ENCODE measurements at regions of chr19 and their contacts with region 1.

Region 1: GRCh38 chr19:48553676-48554386 is 1.9 kb downstream of the SULT2B1 start:
- DNase-seq: peak; percentile 99 to 100
- H3K4me3 ChIP-seq: peak overlapping the region; percentile 24
- H3K4me3 Mint-ChIP-seq: peak overlapping the region; percentile 75
- H3K27ac Mint-ChIP-seq: peak overlapping the region; percentile 98
- H3K4me1 ChIP-seq: peaks cover 63% of the 10 kb centered on the region
- H3K4me1 Mint-ChIP-seq: peaks cover 43% of the 10 kb centered on the region
- H3K27me3 ChIP-seq: no peaks in the 10 kb centered on the region
- H3K27me3 Mint-ChIP-seq: no peaks in the 10 kb centered on the region
- CTCF ChIP-seq: no peak

Region 2: DNA sequence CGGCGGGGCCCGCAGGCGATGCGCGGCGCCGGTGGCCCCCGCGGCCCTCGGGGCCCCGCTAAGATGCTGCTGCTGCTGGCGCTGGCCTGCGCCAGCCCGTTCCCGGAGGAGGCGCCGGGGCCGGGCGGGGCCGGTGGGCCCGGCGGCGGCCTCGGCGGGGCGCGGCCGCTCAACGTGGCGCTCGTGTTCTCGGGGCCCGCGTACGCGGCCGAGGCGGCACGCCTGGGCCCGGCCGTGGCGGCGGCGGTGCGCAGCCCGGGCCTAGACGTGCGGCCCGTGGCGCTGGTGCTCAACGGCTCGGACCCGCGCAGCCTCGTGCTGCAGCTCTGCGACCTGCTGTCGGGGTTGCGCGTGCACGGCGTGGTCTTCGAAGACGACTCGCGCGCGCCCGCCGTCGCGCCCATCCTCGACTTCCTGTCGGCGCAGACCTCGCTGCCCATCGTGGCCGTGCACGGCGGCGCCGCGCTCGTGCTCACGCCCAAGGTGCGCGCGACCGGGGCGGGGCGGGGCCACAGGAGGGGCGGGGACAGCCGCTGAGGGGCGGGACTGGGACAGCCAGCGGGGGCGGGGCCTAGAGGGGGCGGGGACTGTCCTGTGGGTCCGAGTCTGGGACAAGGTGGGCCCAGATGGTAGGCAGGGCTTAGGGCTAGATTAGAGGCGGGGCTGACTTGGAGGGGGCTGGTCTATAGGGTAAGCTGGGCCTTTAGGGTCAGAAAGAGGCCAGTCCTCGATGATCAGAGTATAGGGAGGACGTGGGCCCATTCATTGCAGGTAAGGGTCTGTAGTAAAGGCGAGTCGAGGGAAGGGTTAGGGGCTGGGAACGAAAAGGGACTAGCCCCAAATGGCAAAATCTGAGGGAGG is 155.2 kb before region 1 on chr19:
- CTCF ChIA-PET with region 1: no interaction called
- POLR2A ChIA-PET with region 1: interaction called, 11 read pairs
- intact Hi-C with region 1: no loop called
- DNase-seq: peak; percentile 93 to 95
- H3K4me3 ChIP-seq: peak overlapping the region; percentile 51
- H3K4me3 Mint-ChIP-seq: peak overlapping the region; percentile 83
- H3K27ac Mint-ChIP-seq: peak overlapping the region; percentile 67
- H3K4me1 ChIP-seq: peaks cover 35% of the 10 kb centered on the region
- H3K4me1 Mint-ChIP-seq: peaks cover 50% of the 10 kb centered on the region
- H3K27me3 ChIP-seq: no peaks in the 10 kb centered on the region
- H3K27me3 Mint-ChIP-seq: no peaks in the 10 kb centered on the region
- CTCF ChIP-seq: no peak

Region 3: GRCh38 chr19:48513289-48514122 is 40.3 kb before region 1 on chr19:
- CTCF ChIA-PET with region 1: interaction called, 5 read pairs
- POLR2A ChIA-PET with region 1: interaction called, 4 read pairs
- intact Hi-C with region 1: loop called (anchors 1 kb)
- DNase-seq: peak; percentile 85 to 87
- H3K4me3 ChIP-seq: peak overlapping the region; percentile 83
- H3K4me3 Mint-ChIP-seq: no peak overlapping the region
- H3K27ac Mint-ChIP-seq: peak overlapping the region; percentile 60
- H3K4me1 ChIP-seq: peaks cover 18% of the 10 kb centered on the region
- H3K4me1 Mint-ChIP-seq: peaks cover 35% of the 10 kb centered on the region
- H3K27me3 ChIP-seq: no peaks in the 10 kb centered on the region
- H3K27me3 Mint-ChIP-seq: no peaks in the 10 kb centered on the region
- CTCF ChIP-seq: no peak

Region 4: GRCh38 chr19:48571378-48572162 is 17.7 kb after region 1 on chr19:
- CTCF ChIA-PET with region 1: interaction called, 6 read pairs
- POLR2A ChIA-PET with region 1: interaction called, 7 read pairs
- intact Hi-C with region 1: loop called (anchors 1 kb)
- DNase-seq: peak; percentile 64 to 74
- H3K4me3 ChIP-seq: no peak overlapping the region
- H3K4me3 Mint-ChIP-seq: no peak overlapping the region
- H3K27ac Mint-ChIP-seq: peak overlapping the region; percentile 67
- H3K4me1 ChIP-seq: peaks cover 31% of the 10 kb centered on the region
- H3K4me1 Mint-ChIP-seq: peaks cover 23% of the 10 kb centered on the region
- H3K27me3 ChIP-seq: no peaks in the 10 kb centered on the region
- H3K27me3 Mint-ChIP-seq: no peaks in the 10 kb centered on the region
- CTCF ChIP-seq: no peak

Region 5: DNA sequence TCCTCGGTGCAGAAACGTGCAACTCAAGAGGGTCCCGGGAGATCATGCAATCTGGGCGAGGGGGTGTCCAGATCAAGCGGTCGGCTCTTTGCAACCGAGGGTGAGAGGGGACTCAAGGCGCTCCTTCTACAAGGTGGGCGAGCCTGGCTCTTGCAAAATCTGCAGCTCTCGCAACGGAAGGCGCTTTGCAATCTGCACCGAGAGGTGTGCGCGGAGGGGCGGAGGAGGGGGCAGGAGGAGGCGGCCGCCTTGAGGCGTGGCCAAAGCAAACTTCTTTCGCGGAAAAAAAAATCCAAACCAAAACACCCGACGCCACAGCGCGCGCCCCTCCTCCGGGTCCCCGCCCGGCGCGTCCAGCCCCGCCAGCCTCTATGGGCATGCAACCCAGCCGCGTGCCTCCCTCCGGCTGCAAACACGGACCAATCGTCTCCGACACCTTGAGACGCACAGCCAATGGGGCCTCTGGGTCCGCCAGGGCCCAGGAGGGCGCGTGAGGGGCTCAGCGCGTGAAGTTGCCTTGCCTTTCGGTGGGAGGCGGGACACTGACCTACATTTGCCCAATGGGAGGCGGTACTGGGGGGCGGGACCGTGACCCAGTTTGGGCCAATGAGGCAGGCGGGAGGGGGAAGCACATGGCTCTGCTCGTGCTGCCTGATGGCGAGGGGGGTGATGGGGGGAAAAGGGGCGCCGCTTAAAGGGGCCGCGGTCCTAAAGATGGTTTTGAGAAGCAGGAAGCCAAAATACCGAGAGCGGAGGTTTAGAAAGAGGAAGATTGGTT is 83.5 kb after region 1 on chr19 and contains the start of gene DBP:
- CTCF ChIA-PET with region 1: no interaction called
- POLR2A ChIA-PET with region 1: no interaction called
- intact Hi-C with region 1: loop called (anchors 1 kb)
- DNase-seq: peak; percentile 100
- H3K4me3 ChIP-seq: peak within 1 kb of the TSS; percentile 63
- H3K4me3 Mint-ChIP-seq: peak within 1 kb of the TSS; percentile 80
- H3K27ac Mint-ChIP-seq: peak within 1 kb of the TSS; percentile 96
- H3K4me1 ChIP-seq: peaks cover 33% of the 10 kb centered on the region
- H3K4me1 Mint-ChIP-seq: peaks cover 36% of the 10 kb centered on the region
- H3K27me3 ChIP-seq: no peaks in the 10 kb centered on the region
- H3K27me3 Mint-ChIP-seq: no peaks in the 10 kb centered on the region
- CTCF ChIP-seq: no peak
- total RNA-seq, gene DBP: 17.4 and 17.7 TPM in 2 replicates